Activated T-helper 2 cell treated with anti-CD3 and anti-CD28 coated beads, Interferon-gamma antibody, Interleukin-2, Interleukin-4, amounts not matched to agents 10 μg/mL and 5 μg/mL and 100 μg/mL, durations not matched to agents 14 hours and 24 hours and 36 hours (primary cell): ENCODE measurements at regions of chr11 and their contacts with region 1.

Region 1: DNA sequence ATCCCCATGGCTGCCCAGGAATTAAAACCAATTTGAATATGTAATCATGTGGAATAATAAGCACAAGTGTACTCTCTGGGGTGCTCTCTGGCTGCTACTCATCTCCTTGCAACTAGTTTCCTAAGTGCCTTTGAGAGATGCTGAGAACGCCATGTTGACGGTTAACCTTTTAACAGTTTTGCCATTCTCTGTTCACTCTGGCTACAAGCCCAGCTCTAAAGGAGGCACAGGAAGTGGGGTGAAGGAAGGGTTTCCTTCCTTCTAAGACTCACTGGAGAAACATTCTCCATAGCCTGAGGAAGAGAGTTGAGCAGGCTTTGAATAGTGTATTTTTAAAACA is 122.0 kb upstream of the ZC3H12C start:
- DNase-seq: no peak
- H3K4me3 Mint-ChIP-seq: peak overlapping the region; percentile 11
- H3K27ac Mint-ChIP-seq: peak overlapping the region; percentile 89
- H3K4me1 Mint-ChIP-seq: peaks cover 60% of the 10 kb centered on the region
- H3K27me3 Mint-ChIP-seq: peaks cover 4% of the 10 kb centered on the region

Region 2: DNA sequence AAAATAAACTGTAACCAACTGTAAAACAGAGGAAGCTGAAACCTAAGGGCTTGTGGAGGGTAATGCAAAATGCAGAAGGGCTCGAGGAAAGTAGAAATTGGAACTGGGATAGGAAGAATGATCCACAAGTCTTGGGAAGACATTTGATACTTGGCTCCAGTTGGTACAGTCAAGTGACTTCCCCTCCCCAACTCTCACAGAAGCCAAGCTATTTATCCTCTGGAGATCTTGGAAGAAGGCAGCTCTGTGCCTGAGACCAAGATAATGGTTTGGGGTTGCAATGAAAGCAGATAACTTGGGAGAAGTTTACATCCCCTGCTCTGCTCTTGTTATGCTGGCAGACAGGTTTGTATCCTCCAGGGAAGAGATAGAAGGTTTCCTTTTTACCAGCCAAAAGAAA is 76.9 kb before region 1 on chr11:
- intact Hi-C with region 1: no loop called
- DNase-seq: no peak
- H3K4me3 Mint-ChIP-seq: no peak overlapping the region
- H3K27ac Mint-ChIP-seq: no peak overlapping the region
- H3K4me1 Mint-ChIP-seq: no peaks in the 10 kb centered on the region
- H3K27me3 Mint-ChIP-seq: no peaks in the 10 kb centered on the region

Region 3: DNA sequence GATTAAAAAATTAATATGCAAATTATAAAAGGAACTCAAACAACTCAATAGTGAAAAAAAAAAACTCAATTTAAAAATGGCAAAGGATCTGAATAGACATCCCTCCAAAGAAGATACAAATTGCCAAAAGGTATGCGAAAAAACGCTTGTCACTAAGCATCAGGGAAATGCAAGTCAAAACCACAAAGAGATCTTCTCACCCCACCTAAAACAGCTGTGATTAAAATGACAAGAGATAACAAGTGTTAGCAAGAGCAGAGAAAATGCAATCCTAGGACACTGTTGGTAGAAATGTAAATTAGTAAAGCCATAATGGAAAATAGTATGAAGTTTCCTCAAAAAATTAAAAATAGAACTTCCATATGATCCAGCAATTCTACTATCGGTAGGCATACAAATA is 44.2 kb before region 1 on chr11:
- intact Hi-C with region 1: no loop called
- DNase-seq: no peak
- H3K4me3 Mint-ChIP-seq: no peak overlapping the region
- H3K27ac Mint-ChIP-seq: no peak overlapping the region
- H3K4me1 Mint-ChIP-seq: no peaks in the 10 kb centered on the region
- H3K27me3 Mint-ChIP-seq: peaks cover 10% of the 10 kb centered on the region

Region 4: DNA sequence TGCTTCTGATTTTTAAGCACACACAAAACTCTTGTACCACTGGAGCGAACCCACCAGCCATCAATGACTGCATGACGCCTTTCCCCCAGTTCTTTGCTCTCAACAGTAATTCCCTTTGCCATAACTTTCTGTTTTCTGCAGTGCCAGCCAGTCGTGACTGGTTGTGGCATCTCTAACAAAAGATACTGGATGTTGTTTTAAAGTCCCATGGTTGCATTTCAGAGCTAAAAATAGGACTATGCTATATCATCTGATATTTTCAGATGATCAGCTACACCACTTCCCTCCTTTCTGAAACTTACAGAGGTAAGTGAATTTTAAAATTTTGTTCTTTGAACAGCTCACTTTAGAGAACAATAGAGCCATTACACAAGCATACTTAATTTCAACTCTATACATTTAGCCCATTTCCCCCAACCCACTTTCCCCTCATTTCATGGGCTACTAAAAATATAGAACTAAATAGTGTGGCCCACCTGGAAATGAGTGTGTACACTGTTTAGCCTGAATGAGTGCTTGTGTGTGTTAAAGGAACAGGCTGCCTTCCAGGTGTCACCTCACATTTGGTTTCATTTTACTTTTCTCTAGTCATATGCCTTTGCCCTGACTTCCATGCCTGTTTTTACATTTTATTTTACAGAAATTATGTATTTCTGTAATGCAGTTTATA is 14.9 kb before region 1 on chr11:
- intact Hi-C with region 1: no loop called
- DNase-seq: no peak
- H3K4me3 Mint-ChIP-seq: no peak overlapping the region
- H3K27ac Mint-ChIP-seq: peak overlapping the region; percentile 64
- H3K4me1 Mint-ChIP-seq: peaks cover 30% of the 10 kb centered on the region
- H3K27me3 Mint-ChIP-seq: peaks cover 11% of the 10 kb centered on the region

Region 5: DNA sequence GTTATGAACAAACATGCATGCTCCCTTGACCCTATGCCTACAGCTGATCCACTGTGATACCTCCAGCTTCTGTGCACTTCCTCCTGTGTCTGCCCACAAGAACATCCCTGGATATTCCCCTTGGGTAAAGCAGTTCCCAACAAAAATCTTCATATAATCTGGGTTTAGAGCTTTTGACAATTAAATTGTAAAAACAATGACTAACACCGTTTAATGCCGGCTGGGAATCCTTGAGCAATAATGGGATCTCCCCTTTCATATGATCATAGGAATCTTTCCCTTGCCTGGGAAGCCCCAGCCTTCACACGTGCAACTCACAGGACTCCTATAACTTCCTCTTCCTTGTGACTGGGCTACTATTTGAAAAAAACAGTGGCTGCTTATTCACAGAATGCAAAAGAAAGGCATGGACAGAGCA is 115.7 kb after region 1 on chr11:
- intact Hi-C with region 1: loop called (anchors 1 kb)
- DNase-seq: no peak
- H3K4me3 Mint-ChIP-seq: no peak overlapping the region
- H3K27ac Mint-ChIP-seq: no peak overlapping the region
- H3K4me1 Mint-ChIP-seq: peaks cover 34% of the 10 kb centered on the region
- H3K27me3 Mint-ChIP-seq: peaks cover 11% of the 10 kb centered on the region

Region 6: DNA sequence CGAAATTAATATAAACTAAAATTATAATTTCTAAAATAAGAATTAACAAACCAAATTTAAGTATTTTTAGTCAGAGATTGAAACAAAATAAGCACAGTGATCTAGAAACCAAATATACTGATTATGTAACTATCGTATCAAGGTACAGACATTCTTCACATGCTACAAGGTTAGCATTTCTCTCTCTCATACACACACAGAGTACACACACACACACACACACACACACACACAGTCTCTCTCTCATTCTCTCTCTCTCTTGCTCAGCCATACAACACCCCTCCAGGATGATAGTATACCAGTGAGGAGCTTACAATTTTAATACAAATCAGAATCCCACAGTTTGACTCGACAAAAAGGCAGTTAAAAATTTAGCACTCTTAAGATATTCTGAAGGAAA is 259.2 kb after region 1 on chr11:
- intact Hi-C with region 1: no loop called
- DNase-seq: no peak
- H3K4me3 Mint-ChIP-seq: no peak overlapping the region
- H3K27ac Mint-ChIP-seq: no peak overlapping the region
- H3K4me1 Mint-ChIP-seq: peaks cover 2% of the 10 kb centered on the region
- H3K27me3 Mint-ChIP-seq: no peaks in the 10 kb centered on the region